GM12878 (cell line): ENCODE measurements at regions of chr2 and their contacts with region 1.

Region 1: GRCh38 chr2:226862623-226863022 is 26.8 kb downstream of the RHBDD1 start:
- DNase-seq: peak; percentile 51
- ATAC-seq: peak; percentile 88
- H3K4me3 ChIP-seq: no peak overlapping the region; the same call in 1 of the 2 replicates
- H3K27ac ChIP-seq: peak overlapping the region; percentile 54
- H3K4me1 ChIP-seq: peaks cover 23% of the 10 kb centered on the region
- H3K27me3 ChIP-seq: no peaks in the 10 kb centered on the region
- CTCF ChIP-seq: no peak
- EP300 ChIP-seq: no peak
- POLR2A ChIP-seq: no peak
- RAD21 ChIP-seq: peak; percentile 20; the same call in 1 of the 2 replicates

Region 2: DNA sequence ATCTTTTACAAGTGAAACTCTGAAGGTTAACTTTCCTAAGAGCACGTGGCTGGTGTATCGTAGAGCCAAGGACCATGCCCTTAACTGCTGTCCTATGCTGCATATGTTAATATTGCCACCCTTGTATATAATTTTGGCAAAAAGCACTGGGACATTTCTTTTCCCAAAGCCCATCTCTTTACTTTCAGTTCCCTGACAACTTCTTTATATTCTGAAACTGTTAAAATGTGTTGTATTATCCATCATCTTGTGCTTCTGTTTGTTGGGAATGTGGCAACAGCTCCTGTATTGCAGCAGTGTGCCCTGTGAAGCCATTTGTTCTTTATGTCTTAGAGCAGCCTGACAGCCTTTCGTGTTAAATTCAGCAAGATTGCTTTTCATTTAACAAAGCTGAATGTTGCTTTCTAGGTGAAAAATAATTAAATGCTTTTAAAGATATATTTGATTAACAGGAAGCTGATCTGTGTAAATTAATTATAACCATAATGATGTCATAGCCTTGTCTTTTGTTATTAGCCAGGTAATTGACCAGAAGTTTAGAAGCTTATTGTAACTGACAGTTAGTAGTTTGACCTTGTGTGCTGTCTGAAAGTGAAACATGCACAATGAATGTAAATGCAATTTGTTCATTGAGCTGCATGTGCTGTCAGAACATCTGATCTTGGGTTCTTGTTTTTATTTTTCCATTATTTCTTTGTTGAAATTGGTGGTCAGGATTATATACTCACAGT is 17.1 kb before region 1 on chr2:
- CTCF ChIA-PET with region 1: interaction called, 6 read pairs
- POLR2A ChIA-PET with region 1: interaction called, 18 read pairs
- RAD21 ChIA-PET with region 1: interaction called, 5 read pairs
- SMC1A ChIA-PET with region 1: interaction called, 19 read pairs
- in situ Hi-C with region 1: no loop called
- intact Hi-C with region 1: no loop called
- DNase-seq: no peak
- ATAC-seq: peak; percentile 75
- H3K4me3 ChIP-seq: peak overlapping the region; percentile 39; the same call in 1 of the 2 replicates
- H3K27ac ChIP-seq: peak overlapping the region; percentile 65
- H3K4me1 ChIP-seq: peaks cover 22% of the 10 kb centered on the region
- H3K27me3 ChIP-seq: no peaks in the 10 kb centered on the region
- CTCF ChIP-seq: no peak
- EP300 ChIP-seq: no peak
- POLR2A ChIP-seq: no peak
- RAD21 ChIP-seq: no peak

Region 3: DNA sequence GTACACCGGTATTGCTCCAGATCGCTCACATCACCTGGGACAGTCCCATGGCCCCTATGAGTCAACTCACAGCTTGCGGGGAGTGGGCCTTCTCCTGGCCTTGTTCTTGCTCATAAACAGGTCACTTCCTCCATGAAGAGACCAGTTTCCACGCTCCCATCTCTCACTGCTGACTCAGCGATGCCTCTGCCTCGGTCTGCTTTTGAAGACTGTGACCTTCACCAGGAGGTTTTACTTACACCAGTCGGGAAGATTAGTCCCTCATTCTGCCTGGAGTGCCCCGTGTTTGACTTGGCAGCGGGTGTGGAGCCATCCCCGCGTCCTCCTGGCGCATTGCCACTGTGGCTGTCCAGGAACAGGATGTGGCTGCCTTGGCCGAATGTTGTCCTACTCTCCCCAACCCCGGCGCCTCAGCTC is 133.0 kb after region 1 on chr2:
- CTCF ChIA-PET with region 1: no interaction called
- POLR2A ChIA-PET with region 1: no interaction called
- RAD21 ChIA-PET with region 1: no interaction called
- SMC1A ChIA-PET with region 1: no interaction called
- in situ Hi-C with region 1: no loop called
- intact Hi-C with region 1: no loop called
- DNase-seq: no peak
- ATAC-seq: no peak
- H3K4me3 ChIP-seq: no peak overlapping the region
- H3K27ac ChIP-seq: no peak overlapping the region
- H3K4me1 ChIP-seq: no peaks in the 10 kb centered on the region
- H3K27me3 ChIP-seq: no peaks in the 10 kb centered on the region
- CTCF ChIP-seq: no peak
- EP300 ChIP-seq: no peak
- POLR2A ChIP-seq: no peak
- RAD21 ChIP-seq: no peak